ENCODE measurements at regions of chr10 and their contacts with region 1.

Region 1: DNA sequence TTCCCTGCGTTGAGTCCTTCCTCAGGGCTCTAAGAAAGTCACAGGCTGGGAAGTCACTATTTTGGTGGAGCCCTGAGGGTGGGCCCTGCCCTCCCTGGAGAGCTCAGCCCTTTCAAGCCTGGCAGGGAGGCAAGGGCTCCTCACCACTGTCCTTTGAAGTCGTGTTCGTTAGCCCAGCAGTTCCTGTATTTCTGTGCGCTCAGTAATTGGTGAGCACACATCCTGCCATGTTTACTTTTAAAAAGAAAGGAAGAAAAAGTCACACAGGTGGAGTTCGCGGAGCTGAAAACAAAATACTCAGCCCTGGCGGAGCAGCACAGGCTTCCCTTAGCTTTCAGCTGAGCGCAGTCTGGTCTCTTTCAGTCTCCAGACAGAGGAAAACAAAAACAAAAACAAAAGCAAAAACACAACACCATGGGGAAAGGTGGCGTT is 37.1 kb downstream of the PRKCQ start:
- DNase-seq: peak; percentile 78
- H3K4me3 Mint-ChIP-seq: peak overlapping the region; percentile 77
- H3K27ac Mint-ChIP-seq: peak overlapping the region; percentile 100
- H3K4me1 Mint-ChIP-seq: peaks cover 81% of the 10 kb centered on the region
- H3K27me3 Mint-ChIP-seq: no peaks in the 10 kb centered on the region

Region 2: DNA sequence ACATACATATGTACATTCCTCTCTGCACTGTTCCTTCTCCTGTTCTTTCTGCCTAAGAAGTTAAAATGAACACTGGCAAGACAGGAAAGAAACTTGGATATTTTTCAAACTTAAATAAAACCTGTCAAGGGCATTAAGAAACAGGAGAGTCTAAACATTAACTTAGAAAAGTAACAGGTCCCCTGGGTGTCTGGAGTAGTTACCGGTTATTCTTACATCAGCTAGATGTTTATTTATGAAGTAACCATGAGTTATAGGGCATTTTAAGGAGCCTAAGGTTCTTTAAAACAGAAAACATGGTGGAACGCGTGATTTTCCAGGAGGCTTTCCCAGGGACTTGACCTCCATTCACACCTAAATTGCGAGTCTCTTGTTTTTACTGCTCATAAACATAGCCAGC is 111.2 kb before region 1 on chr10:
- CTCF ChIA-PET with region 1: no interaction called
- DNase-seq: no peak
- H3K4me3 Mint-ChIP-seq: no peak overlapping the region
- H3K27ac Mint-ChIP-seq: peak overlapping the region; percentile 12
- H3K4me1 Mint-ChIP-seq: peaks cover 2% of the 10 kb centered on the region
- H3K27me3 Mint-ChIP-seq: no peaks in the 10 kb centered on the region

Region 3: GRCh38 chr10:6530211-6530840 is 12.7 kb before region 1 on chr10:
- CTCF ChIA-PET with region 1: interaction called, 20 read pairs
- DNase-seq: peak; percentile 91
- H3K4me3 Mint-ChIP-seq: peak overlapping the region; percentile 70
- H3K27ac Mint-ChIP-seq: peak overlapping the region; percentile 97
- H3K4me1 Mint-ChIP-seq: peaks cover 84% of the 10 kb centered on the region
- H3K27me3 Mint-ChIP-seq: no peaks in the 10 kb centered on the region

Region 4: GRCh38 chr10:6563075-6563474 is 20.1 kb after region 1 on chr10:
- CTCF ChIA-PET with region 1: interaction called, 12 read pairs
- DNase-seq: peak; percentile 68
- H3K4me3 Mint-ChIP-seq: peak overlapping the region; percentile 68
- H3K27ac Mint-ChIP-seq: peak overlapping the region; percentile 92
- H3K4me1 Mint-ChIP-seq: peaks cover 94% of the 10 kb centered on the region
- H3K27me3 Mint-ChIP-seq: no peaks in the 10 kb centered on the region

Region 5: DNA sequence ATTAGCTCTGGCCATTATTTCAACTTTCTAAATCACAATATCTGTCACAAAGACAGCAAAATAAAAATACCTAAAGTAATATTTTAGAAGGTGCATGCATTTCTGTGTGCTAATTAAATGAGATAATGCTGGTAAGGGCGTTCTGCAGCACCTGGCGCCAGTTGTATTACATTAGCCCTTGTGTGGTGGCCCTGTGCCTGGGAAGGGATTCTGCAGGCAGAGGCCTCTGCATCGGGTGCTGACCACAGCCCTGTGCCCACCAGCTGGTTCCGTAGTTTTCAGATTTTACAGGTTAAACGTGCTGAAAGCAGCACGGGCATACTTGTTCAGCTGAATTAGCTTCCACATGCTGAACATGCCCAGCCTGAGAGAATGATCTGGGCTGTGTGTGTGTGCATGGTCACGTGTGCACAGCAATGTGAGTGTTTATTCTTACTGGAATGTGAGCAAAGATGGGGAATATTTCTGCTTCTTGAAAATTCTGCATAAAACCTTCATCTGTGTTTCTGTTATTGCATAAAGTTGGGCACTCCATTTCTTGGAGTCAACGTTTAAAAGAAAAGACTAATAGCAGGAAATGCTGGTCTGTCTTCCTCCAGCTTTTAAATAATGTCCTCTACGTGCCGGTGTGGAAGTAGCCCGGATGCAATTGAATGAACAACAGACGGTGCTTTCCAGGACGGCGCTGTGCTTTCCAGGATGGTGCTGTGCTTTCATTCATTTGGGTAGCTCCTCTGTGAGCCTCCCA is 194.9 kb after region 1 on chr10:
- CTCF ChIA-PET with region 1: no interaction called
- DNase-seq: no peak
- H3K4me3 Mint-ChIP-seq: no peak overlapping the region
- H3K27ac Mint-ChIP-seq: no peak overlapping the region
- H3K4me1 Mint-ChIP-seq: peaks cover 7% of the 10 kb centered on the region
- H3K27me3 Mint-ChIP-seq: peaks cover 61% of the 10 kb centered on the region